ENCODE measurements at regions of chr17 and their contacts with region 1.

Region 1: DNA sequence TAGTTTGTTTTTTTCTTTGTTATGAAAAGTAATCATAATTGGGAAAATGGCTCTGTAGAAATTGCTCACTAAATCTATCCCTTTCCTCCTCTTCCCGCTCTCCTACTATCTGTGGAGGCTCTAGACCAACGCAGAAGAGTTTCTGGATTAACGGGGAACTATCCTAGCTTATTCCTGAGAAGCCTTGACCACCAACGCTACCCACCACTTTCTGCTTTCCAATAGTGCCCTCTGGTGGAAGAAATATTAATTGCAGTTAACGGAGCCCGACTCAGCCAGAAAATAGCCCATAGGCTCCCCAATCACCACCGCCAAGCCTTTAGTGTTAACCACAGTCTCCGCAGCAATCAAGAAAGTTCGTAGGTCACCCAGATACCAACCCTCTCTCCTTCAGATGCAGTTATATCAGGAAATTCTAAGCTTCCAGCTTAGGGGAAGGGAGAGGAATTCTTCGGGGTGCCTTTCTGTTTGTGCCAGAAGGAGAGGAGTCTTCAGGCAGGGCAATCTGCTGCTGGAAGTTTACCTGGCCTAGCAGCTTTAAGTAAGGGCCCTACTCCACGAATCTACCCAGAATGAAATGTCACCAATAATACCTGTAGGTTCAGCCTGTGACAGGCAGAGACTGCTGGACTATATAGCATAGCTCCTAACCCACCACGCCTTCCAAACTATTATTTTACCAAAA is 23.0 kb upstream of the NSRP1 start:
- DNase-seq: peak; percentile 75 to 79 (median 78)
- ATAC-seq: peak; percentile 92
- H3K4me3 ChIP-seq: no peak overlapping the region
- H3K27ac ChIP-seq: no peak overlapping the region
- H3K4me1 ChIP-seq: peaks cover 0 to 9% of the 10 kb centered on the region in 2 experiments; a peak in 3 of 5 replicates
- H3K27me3 ChIP-seq: peaks cover 15 to 20% of the 10 kb centered on the region in 2 experiments
- CTCF ChIP-seq: peak; percentile 77 to 91 (median 82)
- EP300 ChIP-seq: no peak
- POLR2A ChIP-seq: no peak
- RAD21 ChIP-seq: peak; percentile 90 to 94

Region 2: DNA sequence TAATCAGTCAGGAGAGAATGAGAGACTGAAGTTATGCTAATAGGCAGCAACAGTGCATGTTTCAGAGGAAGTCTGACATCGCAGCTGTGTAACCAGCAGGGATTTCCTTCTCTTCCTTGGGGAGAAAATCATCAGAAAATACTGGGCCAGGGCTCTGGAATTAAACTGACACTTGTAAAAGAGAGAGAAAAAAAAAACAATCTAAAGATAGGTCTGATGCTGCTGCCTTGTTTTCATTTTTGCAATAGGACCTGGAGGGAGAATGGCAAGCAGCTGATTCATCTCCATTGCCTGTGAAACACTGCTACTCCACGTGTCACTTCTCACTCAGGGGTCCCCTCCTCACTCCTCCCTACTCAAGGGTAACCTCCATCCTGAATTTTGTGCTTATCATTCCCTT is 453.2 kb before region 1 on chr17:
- CTCF ChIA-PET with region 1: interaction called, 5 read pairs
- POLR2A ChIA-PET with region 1: no interaction called
- in situ Hi-C with region 1: no loop called
- intact Hi-C with region 1: loop called (anchors 2 kb)
- DNase-seq: no peak
- ATAC-seq: no peak
- H3K4me3 ChIP-seq: no peak overlapping the region
- H3K27ac ChIP-seq: no peak overlapping the region
- H3K4me1 ChIP-seq: peaks cover 12 to 22% of the 10 kb centered on the region in 2 experiments
- H3K27me3 ChIP-seq: no peaks in the 10 kb centered on the region
- CTCF ChIP-seq: no peak
- EP300 ChIP-seq: no peak
- POLR2A ChIP-seq: no peak
- RAD21 ChIP-seq: no peak

Region 3: DNA sequence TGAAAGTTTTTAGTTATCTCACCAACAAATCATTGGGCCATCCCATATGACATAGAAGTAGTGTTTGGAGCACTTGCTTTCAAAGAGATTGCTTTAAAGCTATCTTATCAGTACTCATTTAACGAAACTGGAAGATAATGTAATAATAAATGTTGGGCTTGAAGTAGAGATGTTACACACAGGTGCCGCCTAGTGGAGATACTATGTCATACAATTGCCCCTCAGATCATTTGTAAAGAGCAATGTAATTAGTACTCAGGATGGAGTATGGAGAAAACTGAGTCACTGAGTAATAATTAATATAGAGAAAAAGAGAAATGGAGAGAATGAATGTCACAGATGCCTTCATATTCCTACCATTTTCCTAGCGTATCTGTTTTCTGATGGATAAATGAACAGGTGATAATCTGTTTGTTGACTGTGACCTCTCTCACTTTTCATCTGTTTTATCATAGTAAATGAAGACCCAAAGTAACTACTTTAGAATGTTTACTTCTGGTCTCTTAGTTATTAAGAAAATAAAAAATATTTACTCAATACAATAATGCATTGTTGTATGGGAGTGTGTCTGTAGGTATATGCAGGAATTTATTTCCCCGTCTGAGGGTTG is 71.8 kb before region 1 on chr17:
- CTCF ChIA-PET with region 1: interaction called, 19 read pairs
- POLR2A ChIA-PET with region 1: no interaction called
- in situ Hi-C with region 1: no loop called
- intact Hi-C with region 1: loop called (anchors 1 kb)
- DNase-seq: peak; percentile 39 to 57 (median 45)
- ATAC-seq: peak; percentile 68; the same call in 1 of the 3 replicates
- H3K4me3 ChIP-seq: no peak overlapping the region
- H3K27ac ChIP-seq: no peak overlapping the region
- H3K4me1 ChIP-seq: no peaks in the 10 kb centered on the region
- H3K27me3 ChIP-seq: no peaks in the 10 kb centered on the region; a peak in 1 of 5 replicates
- CTCF ChIP-seq: peak; percentile 65 to 81 (median 72); a peak in 5 of 6 replicates
- EP300 ChIP-seq: no peak
- POLR2A ChIP-seq: no peak
- RAD21 ChIP-seq: peak; percentile 55 to 87

Region 4: GRCh38 chr17:30027676-30028075 is 65.9 kb before region 1 on chr17:
- CTCF ChIA-PET with region 1: interaction called, 19 read pairs
- POLR2A ChIA-PET with region 1: interaction called, 4 read pairs
- in situ Hi-C with region 1: no loop called
- intact Hi-C with region 1: loop called (anchors 1 kb)
- DNase-seq: no peak
- ATAC-seq: no peak
- H3K4me3 ChIP-seq: no peak overlapping the region
- H3K27ac ChIP-seq: no peak overlapping the region
- H3K4me1 ChIP-seq: no peaks in the 10 kb centered on the region
- H3K27me3 ChIP-seq: peaks cover 3 to 7% of the 10 kb centered on the region in 2 experiments; a peak in 4 of 5 replicates
- CTCF ChIP-seq: no peak
- EP300 ChIP-seq: no peak
- POLR2A ChIP-seq: no peak
- RAD21 ChIP-seq: no peak

Region 5: GRCh38 chr17:30148376-30148775 is 54.8 kb after region 1 on chr17:
- CTCF ChIA-PET with region 1: no interaction called
- POLR2A ChIA-PET with region 1: no interaction called
- in situ Hi-C with region 1: no loop called
- intact Hi-C with region 1: no loop called
- DNase-seq: peak in 1 of 4 experiments; percentile 8
- ATAC-seq: 0 out of 3 replicates have a peak, but pooled peaks have one; percentile 27
- H3K4me3 ChIP-seq: no peak overlapping the region
- H3K27ac ChIP-seq: no peak overlapping the region; the same call in 2 of the 3 replicates
- H3K4me1 ChIP-seq: peaks cover 0 to 6% of the 10 kb centered on the region in 2 experiments; a peak in 2 of 5 replicates
- H3K27me3 ChIP-seq: no peaks in the 10 kb centered on the region
- CTCF ChIP-seq: no peak
- EP300 ChIP-seq: no peak
- POLR2A ChIP-seq: no peak
- RAD21 ChIP-seq: no peak

Region 6: DNA sequence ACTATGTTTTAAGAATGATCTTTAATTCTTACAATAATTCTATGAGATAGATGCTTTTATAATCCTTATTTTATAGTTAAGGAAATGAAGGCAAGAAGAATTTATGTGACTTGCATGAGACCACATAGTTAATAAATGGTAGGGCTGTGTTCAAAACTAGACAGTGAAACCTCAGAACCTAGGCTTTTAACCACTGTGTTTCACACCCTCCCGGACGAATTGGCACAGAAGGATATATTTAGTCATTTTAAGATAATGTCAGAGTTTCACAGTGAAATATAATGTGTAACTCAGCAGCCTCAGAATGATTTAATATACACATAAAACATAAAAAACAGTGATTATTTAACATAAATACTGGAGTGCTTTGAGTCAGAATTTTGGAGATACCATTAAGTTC is 80.0 kb after region 1 on chr17:
- CTCF ChIA-PET with region 1: no interaction called
- POLR2A ChIA-PET with region 1: no interaction called
- in situ Hi-C with region 1: no loop called
- intact Hi-C with region 1: no loop called
- DNase-seq: no peak
- ATAC-seq: no peak
- H3K4me3 ChIP-seq: no peak overlapping the region
- H3K27ac ChIP-seq: no peak overlapping the region
- H3K4me1 ChIP-seq: no peaks in the 10 kb centered on the region
- H3K27me3 ChIP-seq: no peaks in the 10 kb centered on the region
- CTCF ChIP-seq: no peak
- EP300 ChIP-seq: no peak
- POLR2A ChIP-seq: no peak
- RAD21 ChIP-seq: no peak